ENCODE measurements at regions of chr20 and their contacts with region 1.

Region 1: DNA sequence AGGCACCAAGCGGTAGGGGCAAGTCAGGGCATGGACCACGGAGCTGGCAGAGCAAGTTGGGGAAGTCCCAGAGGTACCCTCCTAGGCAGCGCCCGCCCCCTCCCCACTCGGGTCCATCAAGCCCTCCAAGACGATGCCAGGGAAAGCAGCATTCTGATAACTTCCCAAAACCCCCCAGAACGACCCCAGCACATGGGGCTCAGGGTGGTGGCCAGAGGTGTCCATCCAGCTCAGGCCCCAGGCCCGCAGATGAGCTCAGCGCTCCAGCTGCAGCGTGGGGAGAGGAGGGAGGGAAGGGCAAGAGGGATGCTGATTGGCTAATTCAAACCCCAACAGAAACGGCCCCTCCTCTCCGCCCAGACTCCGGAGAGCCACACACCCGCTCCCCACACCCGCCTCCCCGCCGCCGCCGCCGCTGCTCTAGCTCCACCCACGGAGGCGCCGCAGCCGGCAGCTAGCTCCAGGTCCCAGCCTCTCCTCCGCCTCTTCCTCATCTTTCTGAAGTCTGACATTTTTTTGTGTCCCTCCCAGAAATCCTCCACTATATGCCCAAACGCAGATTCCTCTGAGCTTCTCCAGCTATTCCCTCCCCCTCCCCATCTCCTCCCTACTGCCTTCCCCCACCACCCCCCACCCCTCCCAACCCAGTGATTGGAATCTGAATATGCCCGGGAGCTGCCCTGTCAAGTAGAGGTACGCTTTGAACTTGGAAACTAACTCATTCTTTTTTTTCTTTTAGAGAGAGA is 40.3 kb upstream of the TLDC2 start:
- DNase-seq: peak; percentile 73 to 93
- H3K4me3 ChIP-seq: peak overlapping the region; percentile 39; the same call in 1 of the 2 replicates
- H3K27ac ChIP-seq: 0 out of 2 replicates have a peak overlapping the region, but pooled peaks have one; percentile 16
- H3K4me1 ChIP-seq: peaks cover 18% of the 10 kb centered on the region
- H3K27me3 ChIP-seq: no peaks in the 10 kb centered on the region
- CTCF ChIP-seq: no peak

Region 2: GRCh38 chr20:35432430-35432735 is 1403.2 kb before region 1 on chr20:
- CTCF ChIA-PET with region 1: no interaction called
- POLR2A ChIA-PET with region 1: interaction called, 11 read pairs
- intact Hi-C with region 1: no loop called
- DNase-seq: no peak
- H3K4me3 ChIP-seq: no peak overlapping the region
- H3K27ac ChIP-seq: no peak overlapping the region
- H3K4me1 ChIP-seq: no peaks in the 10 kb centered on the region
- H3K27me3 ChIP-seq: no peaks in the 10 kb centered on the region
- CTCF ChIP-seq: no peak

Region 3: DNA sequence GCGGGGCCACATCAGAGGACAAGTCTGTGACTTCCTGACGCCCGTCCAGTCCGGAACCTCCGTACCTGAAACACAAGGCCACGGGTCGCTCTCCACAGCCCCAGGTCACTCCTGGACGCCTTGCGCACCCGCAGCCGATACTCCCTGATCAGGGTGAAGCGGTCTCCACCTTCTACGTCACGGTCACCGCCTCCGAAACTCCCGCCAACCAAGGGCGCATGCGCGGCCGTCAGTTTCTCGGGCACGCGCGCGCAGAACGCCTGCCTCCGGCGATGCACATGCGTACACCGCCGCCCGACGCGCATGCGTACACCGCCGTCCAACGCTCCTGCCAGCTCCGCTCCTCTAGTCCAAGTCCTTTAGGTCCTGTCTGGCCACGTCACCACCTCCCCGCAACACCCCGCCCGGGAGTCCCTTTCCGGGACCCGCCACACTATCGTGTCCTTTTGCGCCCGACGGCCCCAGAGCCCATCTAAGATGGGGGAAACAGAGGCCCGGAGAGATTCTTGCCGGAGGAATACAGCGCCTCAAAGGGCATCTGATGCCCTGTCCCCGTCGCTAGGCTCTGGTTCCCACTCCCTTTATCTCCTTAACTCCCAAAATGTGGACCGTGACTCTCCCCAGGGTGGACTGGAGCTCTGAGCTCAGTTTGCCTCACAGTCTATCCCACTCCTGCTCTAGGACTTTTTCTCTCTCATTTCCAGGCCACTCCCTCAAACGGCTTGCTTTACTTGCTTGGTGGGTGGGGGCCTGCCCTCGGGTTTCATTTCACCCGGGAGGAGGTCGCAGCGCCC is 61.8 kb before region 1 on chr20 and contains the start of gene DSN1:
- CTCF ChIA-PET with region 1: interaction called, 10 read pairs
- POLR2A ChIA-PET with region 1: interaction called, 16 read pairs
- intact Hi-C with region 1: no loop called
- DNase-seq: peak; percentile 91 to 99
- H3K4me3 ChIP-seq: peak within 1 kb of the TSS; percentile 70
- H3K27ac ChIP-seq: peak within 1 kb of the TSS; percentile 85
- H3K4me1 ChIP-seq: peaks cover 7% of the 10 kb centered on the region
- H3K27me3 ChIP-seq: no peaks in the 10 kb centered on the region
- CTCF ChIP-seq: peak; percentile 87
- total RNA-seq, gene DSN1: 29.2 and 32.4 TPM in 2 replicates

Region 4: GRCh38 chr20:36792422-36792821 is 43.2 kb before region 1 on chr20:
- CTCF ChIA-PET with region 1: interaction called, 10 read pairs
- POLR2A ChIA-PET with region 1: no interaction called
- intact Hi-C with region 1: no loop called
- DNase-seq: peak; percentile 85 to 87
- H3K4me3 ChIP-seq: no peak overlapping the region
- H3K27ac ChIP-seq: no peak overlapping the region
- H3K4me1 ChIP-seq: no peaks in the 10 kb centered on the region
- H3K27me3 ChIP-seq: no peaks in the 10 kb centered on the region
- CTCF ChIP-seq: peak; percentile 66

Region 5: DNA sequence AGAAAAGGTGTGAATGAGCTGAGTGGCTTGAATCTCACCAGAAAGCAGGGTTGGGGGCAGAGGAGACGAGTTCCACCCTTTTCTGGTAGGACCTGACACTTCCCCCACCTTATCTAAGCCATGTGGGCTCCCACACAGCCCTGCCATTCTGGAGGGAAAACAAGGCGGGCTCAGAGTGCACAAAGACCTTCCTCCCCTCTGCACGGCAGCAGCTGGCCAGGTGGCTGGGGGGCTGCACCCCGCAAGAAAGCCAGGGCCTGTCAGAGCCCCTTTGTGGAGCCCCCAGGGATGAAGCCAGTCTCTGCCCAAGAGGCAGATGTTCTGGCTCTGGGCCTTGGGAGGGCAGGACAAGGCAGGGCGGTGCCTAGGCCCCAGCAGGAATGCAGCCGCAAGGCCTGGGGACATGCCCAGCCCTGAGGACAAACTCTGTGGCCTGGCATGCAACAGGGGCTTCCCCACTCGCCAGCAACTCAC is 13.6 kb before region 1 on chr20:
- CTCF ChIA-PET with region 1: interaction called, 15 read pairs
- POLR2A ChIA-PET with region 1: interaction called, 9 read pairs
- intact Hi-C with region 1: no loop called
- DNase-seq: peak; percentile 41 to 89
- H3K4me3 ChIP-seq: no peak overlapping the region
- H3K27ac ChIP-seq: no peak overlapping the region
- H3K4me1 ChIP-seq: peaks cover 47% of the 10 kb centered on the region
- H3K27me3 ChIP-seq: no peaks in the 10 kb centered on the region
- CTCF ChIP-seq: no peak

Region 6: DNA sequence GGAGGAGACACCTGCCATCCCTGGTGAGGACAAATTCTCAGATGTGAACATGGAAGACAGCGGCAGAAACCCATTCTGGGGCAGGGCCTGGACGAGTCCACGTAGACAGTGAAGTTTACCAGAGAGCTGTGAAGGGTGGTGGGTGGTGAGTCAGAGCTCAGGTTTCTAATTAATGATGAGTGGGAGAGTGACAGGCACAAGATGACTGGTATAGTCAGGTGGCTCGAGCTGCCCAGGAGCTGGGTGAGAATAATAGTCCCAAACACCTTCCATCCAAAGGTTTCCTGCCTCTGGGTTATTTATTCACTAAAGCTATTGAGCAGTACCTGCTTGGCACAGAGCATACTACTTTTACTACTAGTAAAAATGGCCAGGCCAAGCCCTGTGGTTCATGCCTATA is 46.3 kb after region 1 on chr20:
- CTCF ChIA-PET with region 1: interaction called, 14 read pairs
- POLR2A ChIA-PET with region 1: no interaction called
- intact Hi-C with region 1: no loop called
- DNase-seq: no peak
- H3K4me3 ChIP-seq: no peak overlapping the region
- H3K27ac ChIP-seq: no peak overlapping the region
- H3K4me1 ChIP-seq: no peaks in the 10 kb centered on the region; the same call in 1 of the 2 replicates
- H3K27me3 ChIP-seq: no peaks in the 10 kb centered on the region
- CTCF ChIP-seq: no peak